Endothelial cell of umbilical vein (primary cell): ENCODE measurements at regions of chr18 and their contacts with region 1.

Region 1: DNA sequence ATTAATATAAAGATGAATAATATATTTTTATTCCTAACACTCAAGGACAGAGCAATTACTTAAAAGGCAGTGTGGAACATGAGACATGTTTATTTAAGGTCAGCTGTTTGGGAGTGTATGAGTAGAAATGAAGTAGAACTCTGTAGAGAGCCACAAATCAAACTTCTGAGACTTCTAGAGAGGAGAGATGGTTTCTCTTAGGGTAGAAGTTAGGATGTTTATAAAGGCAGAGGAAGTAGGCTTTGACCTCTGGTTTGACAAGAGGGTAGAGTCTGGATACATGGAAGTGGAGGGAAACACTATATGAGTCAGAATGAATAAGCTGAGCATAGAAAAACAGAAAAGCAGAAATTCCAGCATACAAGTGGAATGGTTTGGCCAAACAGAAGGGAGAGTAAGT is 262.1 kb upstream of the KLHL14 start:
- DNase-seq: peak; percentile 93
- H3K4me3 ChIP-seq: no peak overlapping the region
- H3K27ac ChIP-seq: peak overlapping the region; percentile 72
- H3K4me1 ChIP-seq: peaks cover 22% of the 10 kb centered on the region
- H3K27me3 ChIP-seq: no peaks in the 10 kb centered on the region
- CTCF ChIP-seq: no peak
- POLR2A ChIP-seq: no peak

Region 2: GRCh38 chr18:33020877-33021276 is 14.1 kb before region 1 on chr18:
- CTCF ChIA-PET with region 1: no interaction called
- POLR2A ChIA-PET with region 1: no interaction called
- dilution Hi-C with region 1: no loop called
- intact Hi-C with region 1: no loop called
- DNase-seq: no peak
- H3K4me3 ChIP-seq: no peak overlapping the region
- H3K27ac ChIP-seq: no peak overlapping the region
- H3K4me1 ChIP-seq: no peaks in the 10 kb centered on the region
- H3K27me3 ChIP-seq: no peaks in the 10 kb centered on the region
- CTCF ChIP-seq: no peak
- POLR2A ChIP-seq: no peak

Region 3: GRCh38 chr18:33116376-33116775 is 81.4 kb after region 1 on chr18:
- CTCF ChIA-PET with region 1: no interaction called
- POLR2A ChIA-PET with region 1: no interaction called
- dilution Hi-C with region 1: no loop called
- intact Hi-C with region 1: loop called (anchors 5 kb)
- DNase-seq: peak; percentile 87
- H3K4me3 ChIP-seq: no peak overlapping the region
- H3K27ac ChIP-seq: no peak overlapping the region
- H3K4me1 ChIP-seq: peaks cover 11% of the 10 kb centered on the region
- H3K27me3 ChIP-seq: no peaks in the 10 kb centered on the region
- CTCF ChIP-seq: no peak
- POLR2A ChIP-seq: no peak

Region 4: GRCh38 chr18:33146014-33146413 is 111.1 kb after region 1 on chr18:
- CTCF ChIA-PET with region 1: no interaction called
- POLR2A ChIA-PET with region 1: no interaction called
- dilution Hi-C with region 1: no loop called
- intact Hi-C with region 1: no loop called
- DNase-seq: no peak
- H3K4me3 ChIP-seq: no peak overlapping the region
- H3K27ac ChIP-seq: no peak overlapping the region
- H3K4me1 ChIP-seq: no peaks in the 10 kb centered on the region
- H3K27me3 ChIP-seq: no peaks in the 10 kb centered on the region
- CTCF ChIP-seq: no peak
- POLR2A ChIP-seq: no peak

Region 5: DNA sequence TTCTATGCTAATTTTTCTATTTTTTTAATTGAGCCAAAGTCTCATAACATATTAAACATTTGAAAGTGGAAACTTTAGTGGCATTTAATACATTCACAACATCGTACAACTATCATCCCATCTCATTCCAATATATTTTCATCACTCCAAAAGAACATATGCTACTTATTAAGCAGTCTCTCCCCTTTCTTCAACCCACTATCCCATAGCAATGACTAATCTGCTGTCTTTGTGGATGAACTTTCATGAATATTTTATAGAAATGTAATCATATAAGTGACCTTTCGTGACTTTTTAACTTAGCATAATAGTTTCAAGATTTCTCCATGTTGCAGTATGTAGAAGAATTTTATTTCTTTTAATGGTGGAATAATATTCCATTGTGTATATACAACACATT is 315.3 kb after region 1 on chr18:
- CTCF ChIA-PET with region 1: no interaction called
- POLR2A ChIA-PET with region 1: no interaction called
- dilution Hi-C with region 1: no loop called
- intact Hi-C with region 1: no loop called
- DNase-seq: no peak
- H3K4me3 ChIP-seq: no peak overlapping the region
- H3K27ac ChIP-seq: no peak overlapping the region
- H3K4me1 ChIP-seq: no peaks in the 10 kb centered on the region
- H3K27me3 ChIP-seq: no peaks in the 10 kb centered on the region
- CTCF ChIP-seq: no peak
- POLR2A ChIP-seq: no peak